ENCODE measurements at regions of chr14 and their contacts with region 1.

Region 1: GRCh38 chr14:100306420-100307219 is at the start of gene SLC25A29:
- DNase-seq: peak; percentile 92
- H3K4me3 ChIP-seq: peak within 1 kb of the TSS; percentile 91 to 98
- H3K27ac ChIP-seq: peak within 1 kb of the TSS; percentile 94 to 96
- H3K4me1 ChIP-seq: peaks cover 17% of the 10 kb centered on the region
- H3K27me3 ChIP-seq: no peaks in the 10 kb centered on the region
- CTCF ChIP-seq: no peak
- POLR2A ChIP-seq: peak; percentile 94
- total RNA-seq, gene SLC25A29: 147 to 169 TPM

Region 2: DNA sequence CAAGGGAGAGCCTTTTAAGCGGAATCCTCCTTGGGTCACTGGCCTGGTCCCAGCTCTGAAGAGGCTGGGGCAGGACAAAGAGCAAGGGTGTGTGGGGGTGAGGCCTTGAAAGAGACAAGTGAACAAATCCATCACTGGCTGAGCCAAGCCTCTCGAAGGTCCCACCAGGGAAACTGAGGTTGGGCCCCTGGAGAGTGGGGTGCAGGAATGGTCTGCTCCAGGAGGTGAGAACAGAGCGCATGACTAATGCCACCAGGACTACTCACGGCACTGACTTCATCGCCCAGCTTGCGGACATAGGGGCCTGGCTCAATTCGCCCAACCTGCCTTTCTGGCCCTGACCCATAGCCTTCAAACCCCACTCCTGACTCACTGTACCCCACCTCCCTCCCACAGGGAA is 127.9 kb before region 1 on chr14:
- intact Hi-C with region 1: no loop called
- DNase-seq: no peak
- H3K4me3 ChIP-seq: no peak overlapping the region
- H3K27ac ChIP-seq: no peak overlapping the region
- H3K4me1 ChIP-seq: no peaks in the 10 kb centered on the region
- H3K27me3 ChIP-seq: no peaks in the 10 kb centered on the region
- CTCF ChIP-seq: no peak
- POLR2A ChIP-seq: no peak

Region 3: DNA sequence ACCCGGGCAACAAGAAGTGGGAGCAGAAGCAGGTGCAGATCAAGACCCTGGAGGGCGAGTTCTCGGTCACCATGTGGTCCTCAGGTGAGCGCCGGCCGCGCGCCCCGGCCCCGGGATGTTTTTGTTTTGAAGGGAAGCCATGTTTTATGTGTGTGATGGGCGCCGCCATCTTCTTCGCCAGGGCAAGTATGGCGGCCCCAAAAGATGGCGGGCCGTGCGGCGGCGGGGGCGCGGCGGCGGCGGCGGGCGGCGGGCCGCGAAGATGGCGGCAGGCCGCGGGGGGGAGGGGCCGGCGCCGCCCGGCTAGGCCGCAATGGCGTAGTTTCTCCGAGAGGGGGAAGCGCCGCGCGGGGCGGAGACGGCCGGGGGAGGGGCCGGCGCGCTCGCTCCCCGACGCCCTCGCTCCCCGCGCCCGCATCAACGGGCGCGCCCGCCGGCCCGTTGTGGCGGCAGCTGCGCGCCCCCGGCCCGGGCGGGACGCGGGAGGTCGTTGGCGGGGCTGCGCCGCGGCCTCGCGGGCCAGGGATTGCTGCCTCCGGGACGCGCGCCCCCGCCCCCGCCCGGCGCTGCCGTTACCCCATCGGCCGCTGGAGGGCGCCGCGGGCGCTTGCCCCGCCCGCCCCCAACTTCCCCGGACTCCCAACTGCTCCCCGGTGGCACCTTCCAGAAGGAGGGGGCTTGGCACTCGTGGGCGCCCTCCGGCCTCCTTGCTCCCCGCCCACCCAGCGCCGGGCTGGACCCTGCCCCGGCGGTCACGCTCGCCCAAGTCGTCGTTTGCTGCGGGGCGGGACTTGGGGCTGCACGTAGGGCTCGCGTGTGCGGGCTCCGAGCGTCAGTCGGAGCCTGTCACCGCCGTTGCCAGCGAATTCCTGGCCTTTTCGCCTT is 66.5 kb before region 1 on chr14:
- intact Hi-C with region 1: loop called (anchors 5 kb)
- DNase-seq: peak; percentile 75
- H3K4me3 ChIP-seq: peak overlapping the region; percentile 99 to 100
- H3K27ac ChIP-seq: peak overlapping the region; percentile 98 to 99
- H3K4me1 ChIP-seq: peaks cover 16% of the 10 kb centered on the region
- H3K27me3 ChIP-seq: no peaks in the 10 kb centered on the region
- CTCF ChIP-seq: peak; percentile 69 to 90 (median 72)
- POLR2A ChIP-seq: peak; percentile 56

Region 4: GRCh38 chr14:100375963-100376735 is 69.5 kb after region 1 on chr14:
- intact Hi-C with region 1: loop called (anchors 5 kb)
- DNase-seq: peak; percentile 88
- H3K4me3 ChIP-seq: peak within 1 kb of the TSS; percentile 64 to 71
- H3K27ac ChIP-seq: peak within 1 kb of the TSS; percentile 74 to 78
- H3K4me1 ChIP-seq: peaks cover 4% of the 10 kb centered on the region
- H3K27me3 ChIP-seq: no peaks in the 10 kb centered on the region
- CTCF ChIP-seq: peak in 3 of 4 experiments; percentile 14 to 39 (median 18)
- POLR2A ChIP-seq: peak; percentile 58

Region 5: GRCh38 chr14:100581228-100582145 is 274.9 kb after region 1 on chr14:
- intact Hi-C with region 1: no loop called
- DNase-seq: no peak
- H3K4me3 ChIP-seq: no peak overlapping the region
- H3K27ac ChIP-seq: no peak overlapping the region
- H3K4me1 ChIP-seq: no peaks in the 10 kb centered on the region
- H3K27me3 ChIP-seq: no peaks in the 10 kb centered on the region
- CTCF ChIP-seq: no peak
- POLR2A ChIP-seq: no peak

Measured in prostate gland (tissue), 2 donors.